ENCODE measurements at regions of chr3 and their contacts with region 1.

Region 1: DNA sequence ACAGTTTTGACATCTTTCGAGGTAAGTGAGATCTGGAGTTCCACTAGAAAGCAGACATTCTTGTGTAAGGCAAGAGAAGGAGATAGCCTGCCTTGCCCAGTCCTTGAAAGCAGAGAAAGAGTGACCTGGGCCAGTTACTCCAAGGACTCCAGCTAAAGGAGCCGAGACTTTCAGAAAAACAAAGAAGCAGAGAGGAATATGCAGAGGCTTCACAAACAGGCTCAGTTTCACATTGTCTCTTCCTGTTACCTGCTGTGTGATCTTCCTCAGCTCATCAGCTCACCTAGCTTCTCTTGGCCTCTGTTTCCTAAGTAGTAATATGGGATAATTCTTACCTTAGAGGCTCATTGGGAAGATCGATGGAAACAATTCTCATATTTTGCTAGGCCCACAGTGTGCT is 81.0 kb downstream of the CDC25A start:
- DNase-seq: no peak

Region 2: GRCh38 chr3:48088749-48089466 is 18.3 kb before region 1 on chr3:
- CTCF ChIA-PET with region 1: interaction called, 3 read pairs
- POLR2A ChIA-PET with region 1: interaction called, 26 read pairs
- DNase-seq: peak; percentile 92

Region 3: DNA sequence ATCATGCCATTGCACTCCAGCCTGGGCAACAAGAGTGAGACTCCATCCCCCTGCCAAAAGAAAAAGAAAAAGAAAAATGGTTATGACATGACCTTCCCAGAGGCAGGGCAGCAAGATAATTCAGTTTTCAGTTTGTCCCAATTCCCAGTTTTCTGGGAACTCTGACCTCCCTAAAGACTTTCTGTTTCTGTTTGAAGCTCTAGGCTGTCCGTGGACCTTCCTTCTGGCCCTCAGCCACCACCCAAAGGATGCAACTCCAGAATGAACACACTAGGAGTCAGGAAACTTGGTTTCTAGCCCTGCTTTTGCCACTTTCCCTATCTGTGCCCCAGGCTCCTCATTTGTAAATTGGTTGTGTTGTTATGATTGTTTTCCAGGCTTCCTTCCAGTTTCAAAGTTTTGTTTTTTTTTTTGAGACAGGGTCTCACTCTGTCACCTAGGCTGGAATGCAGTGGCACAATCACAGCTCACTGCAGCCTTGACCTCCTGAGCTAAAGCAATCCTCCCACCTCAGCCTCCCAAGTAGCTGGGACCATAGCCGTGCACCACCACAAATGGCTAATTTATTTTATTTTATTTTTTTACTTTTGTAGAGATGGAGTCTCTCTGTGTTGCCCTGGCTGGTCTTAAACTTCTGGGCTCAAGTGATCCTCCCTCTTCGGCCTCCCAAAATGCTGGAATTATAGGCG is 12.4 kb after region 1 on chr3:
- CTCF ChIA-PET with region 1: no interaction called
- POLR2A ChIA-PET with region 1: no interaction called
- DNase-seq: no peak

Measured in HEK293T (cell line).